Gastrocnemius medialis (tissue), 4 donors: ENCODE measurements at regions of chr2 and their contacts with region 1.

Region 1: DNA sequence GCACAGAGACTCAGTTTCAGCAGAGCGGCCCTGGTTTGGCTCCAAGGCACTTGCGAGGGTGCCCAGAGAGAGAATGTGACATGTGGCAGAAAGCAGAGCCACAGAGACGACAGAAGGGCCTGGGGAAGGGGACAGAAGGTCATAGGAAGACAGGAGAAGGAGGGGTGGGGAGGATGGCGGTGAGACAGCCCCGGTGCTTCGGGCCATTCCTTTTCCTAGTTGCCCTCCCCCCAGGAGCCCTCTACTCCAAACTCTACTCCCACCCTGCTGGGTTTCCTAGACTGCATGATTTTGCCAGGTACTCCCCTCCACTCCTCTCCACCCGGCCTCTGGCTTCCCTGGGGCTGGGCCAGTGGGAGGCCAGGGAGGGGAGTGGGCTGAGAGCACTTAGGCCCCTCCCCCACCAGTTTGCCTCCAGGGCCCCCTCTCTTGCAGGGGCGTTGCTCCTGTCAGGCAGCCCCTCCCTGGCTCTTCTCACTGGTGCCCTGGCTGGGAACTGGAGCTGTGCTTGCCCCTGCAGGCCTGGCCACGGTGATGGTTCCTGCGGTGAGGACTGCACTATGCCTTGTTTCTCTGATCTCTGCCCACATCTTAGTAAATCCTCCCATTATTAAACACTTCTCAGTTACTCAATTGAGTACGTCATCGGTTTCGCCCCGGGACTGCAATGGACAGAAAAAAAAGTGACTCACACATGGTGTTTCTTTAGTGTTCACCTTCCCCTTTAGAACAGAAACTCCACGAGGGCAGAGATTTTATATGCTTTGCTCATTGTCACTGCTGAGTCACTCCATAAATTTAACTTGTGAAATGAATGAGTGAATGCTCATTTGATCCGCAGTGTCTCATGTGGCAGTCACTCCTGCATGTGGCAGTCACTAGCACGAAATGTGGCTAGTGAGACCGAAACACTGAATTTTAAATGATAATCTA is 58.7 kb upstream of the SP3 start:
- DNase-seq: peak; percentile 81 to 88
- ATAC-seq: peak; percentile 86 to 87
- H3K4me3 ChIP-seq: peak overlapping the region in 3 of 4 donors; percentile 32 to 52 (median 45)
- H3K27ac ChIP-seq: peak overlapping the region; percentile 95 to 99 (median 96)
- H3K4me1 ChIP-seq: peaks cover 23 to 42% of the 10 kb centered on the region in 2 donors
- H3K27me3 ChIP-seq: no peaks in the 10 kb centered on the region
- CTCF ChIP-seq: peak in 1 of 5 experiments; percentile 31
- POLR2A ChIP-seq: peak; percentile 62 to 84

Region 2: DNA sequence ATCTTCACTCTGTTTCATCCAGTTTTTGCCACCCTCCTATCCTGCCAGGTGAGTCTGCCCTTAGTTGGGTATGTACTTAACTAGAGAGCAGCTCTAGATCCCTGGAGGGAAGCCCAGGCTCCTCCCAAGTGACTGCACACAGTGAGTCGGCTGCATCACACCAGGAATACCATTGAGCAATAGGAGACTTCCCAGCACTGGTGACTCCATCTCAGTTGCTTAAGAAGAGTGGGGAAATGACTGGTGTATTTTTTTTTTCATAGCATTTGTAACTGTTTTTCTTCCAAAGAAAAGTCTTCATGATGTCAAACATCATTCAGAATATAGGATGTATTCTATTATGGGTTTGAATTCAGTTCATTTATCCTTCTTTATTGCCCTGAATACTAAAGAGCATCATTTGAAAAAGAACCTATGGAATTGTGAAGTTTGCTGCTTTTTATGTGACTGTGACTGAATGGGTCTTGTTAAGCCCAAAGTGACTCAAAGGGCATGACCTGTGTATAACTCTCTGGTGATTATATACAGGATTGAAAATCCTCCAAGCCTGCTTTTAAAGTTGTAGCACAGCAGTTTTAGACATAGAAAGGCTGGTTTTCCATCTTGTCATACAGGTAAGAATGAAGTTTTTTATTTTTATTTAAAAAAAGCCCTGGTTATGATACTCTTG is 863.9 kb before region 1 on chr2:
- in situ Hi-C with region 1: no loop called
- intact Hi-C with region 1: no loop called
- DNase-seq: peak; percentile 96 to 99
- ATAC-seq: peak; percentile 99
- H3K4me3 ChIP-seq: no peak overlapping the region
- H3K27ac ChIP-seq: peak overlapping the region; percentile 83 to 90 (median 87)
- H3K4me1 ChIP-seq: peaks cover 51 to 61% of the 10 kb centered on the region in 2 donors
- H3K27me3 ChIP-seq: no peaks in the 10 kb centered on the region
- CTCF ChIP-seq: no peak
- POLR2A ChIP-seq: peak in 1 of 2 donors; percentile 15

Region 3: GRCh38 chr2:173965329-173966025 is 58.4 kb before region 1 on chr2 and contains the start of gene SP3:
- in situ Hi-C with region 1: no loop called
- intact Hi-C with region 1: loop called (anchors 1 kb)
- DNase-seq: peak; percentile 97
- ATAC-seq: peak; percentile 78 to 80
- H3K4me3 ChIP-seq: peak within 1 kb of the TSS; percentile 92 to 98 (median 94)
- H3K27ac ChIP-seq: peak within 1 kb of the TSS; percentile 98 to 100 (median 98)
- H3K4me1 ChIP-seq: peaks cover 32 to 35% of the 10 kb centered on the region in 2 donors
- H3K27me3 ChIP-seq: no peaks in the 10 kb centered on the region
- CTCF ChIP-seq: peak in 3 of 5 experiments; percentile 7 to 18 (median 16)
- POLR2A ChIP-seq: peak; percentile 91 to 95
- total RNA-seq, gene SP3: 47.9 to 68.9 (median 58.7) TPM

Region 4: DNA sequence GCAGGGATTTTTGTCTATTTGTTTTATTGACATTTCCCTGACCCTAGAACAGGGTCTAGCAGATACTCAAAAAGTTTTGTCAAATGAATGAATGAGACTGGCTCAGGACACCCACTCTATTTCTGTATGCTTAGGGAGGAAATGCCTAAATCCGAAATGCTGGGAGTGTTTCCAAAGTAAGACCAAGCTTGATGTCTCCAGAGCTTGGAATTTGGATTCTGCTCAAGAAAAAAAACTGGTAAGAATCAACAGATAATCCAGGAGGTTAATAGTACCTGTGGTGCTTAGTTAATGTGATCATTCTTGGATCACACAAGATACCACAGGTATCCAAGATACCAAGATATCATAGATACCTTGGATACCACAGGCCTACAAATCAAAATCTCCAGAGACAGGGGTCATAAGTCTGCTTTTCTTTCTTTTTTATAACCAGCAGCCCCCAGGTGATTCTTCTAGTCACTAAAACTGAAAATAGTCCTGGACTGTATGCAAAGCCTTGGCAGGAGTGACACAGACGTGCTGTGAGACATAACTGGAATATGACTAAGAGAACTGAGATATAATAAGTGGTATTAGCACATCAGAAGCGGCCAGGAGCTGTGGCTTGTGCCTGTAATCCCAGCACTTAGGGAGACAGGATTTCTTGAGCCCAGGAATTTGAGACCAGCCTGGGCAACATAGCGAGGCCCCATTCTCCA is 18.8 kb before region 1 on chr2:
- in situ Hi-C with region 1: no loop called
- intact Hi-C with region 1: loop called (anchors 1 kb)
- DNase-seq: peak; percentile 78 to 87
- ATAC-seq: peak; percentile 100
- H3K4me3 ChIP-seq: no peak overlapping the region
- H3K27ac ChIP-seq: peak overlapping the region; percentile 68 to 83 (median 78)
- H3K4me1 ChIP-seq: peaks cover 10 to 18% of the 10 kb centered on the region in 2 donors
- H3K27me3 ChIP-seq: no peaks in the 10 kb centered on the region
- CTCF ChIP-seq: no peak
- POLR2A ChIP-seq: no peak